Activated CD4-positive, alpha-beta memory T cell treated with anti-CD3 and anti-CD28 coated beads for 36 hours (primary cell): ENCODE measurements at regions of chrX and their contacts with region 1.

Region 1: DNA sequence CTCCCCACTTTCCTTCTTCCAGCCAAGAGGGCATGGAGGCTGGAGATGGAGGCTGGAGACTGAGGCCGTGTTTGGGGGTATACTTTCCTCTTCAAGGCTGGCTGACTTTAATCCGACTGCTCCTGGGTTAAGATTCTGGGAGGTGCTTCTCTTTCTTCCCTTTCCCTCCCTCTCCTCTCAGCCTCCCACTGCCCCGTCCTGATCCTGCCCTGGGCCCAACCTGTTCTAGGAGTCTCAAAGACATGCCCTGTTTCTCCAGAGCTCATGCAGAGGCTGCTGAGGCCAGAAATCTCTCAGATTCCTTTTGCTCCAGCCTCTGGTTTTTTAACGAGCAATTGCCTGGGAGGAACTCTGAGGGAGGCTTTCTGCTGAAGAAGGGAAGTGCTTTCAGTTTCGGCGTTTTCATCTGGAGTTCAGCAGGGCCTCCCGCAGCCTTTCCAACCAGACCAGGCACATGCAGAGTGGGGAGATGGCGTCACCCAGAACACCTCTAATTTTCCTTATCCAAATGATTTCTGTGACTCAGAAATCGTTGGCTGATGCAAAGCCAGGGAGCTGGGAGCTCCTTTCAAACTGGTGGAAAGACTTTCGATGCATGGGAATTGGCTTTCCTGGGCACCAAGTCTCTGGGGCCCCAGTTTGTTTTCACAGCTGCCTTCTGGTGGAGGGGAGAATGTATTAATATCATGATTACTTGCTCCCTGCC is 34.5 kb upstream of the FAM9C start:
- DNase-seq: peak; percentile 20
- H3K4me3 Mint-ChIP-seq: peak overlapping the region; percentile 33
- H3K27ac Mint-ChIP-seq: peak overlapping the region; percentile 43
- H3K4me1 Mint-ChIP-seq: peaks cover 88% of the 10 kb centered on the region
- H3K27me3 Mint-ChIP-seq: no peaks in the 10 kb centered on the region

Region 2: GRCh38 chrX:12974796-12975669 is 103.9 kb before region 1 on chrX and contains the start of gene TMSB4X:
- CTCF ChIA-PET with region 1: interaction called, 3 read pairs
- POLR2A ChIA-PET with region 1: interaction called, 192 read pairs
- intact Hi-C with region 1: no loop called
- DNase-seq: peak; percentile 89
- H3K4me3 Mint-ChIP-seq: peak within 1 kb of the TSS; percentile 94
- H3K27ac Mint-ChIP-seq: peak within 1 kb of the TSS; percentile 99
- H3K4me1 Mint-ChIP-seq: peaks cover 22% of the 10 kb centered on the region
- H3K27me3 Mint-ChIP-seq: peaks cover 3% of the 10 kb centered on the region
- total RNA-seq, gene TMSB4X: 6,087 to 6,256 TPM

Region 3: DNA sequence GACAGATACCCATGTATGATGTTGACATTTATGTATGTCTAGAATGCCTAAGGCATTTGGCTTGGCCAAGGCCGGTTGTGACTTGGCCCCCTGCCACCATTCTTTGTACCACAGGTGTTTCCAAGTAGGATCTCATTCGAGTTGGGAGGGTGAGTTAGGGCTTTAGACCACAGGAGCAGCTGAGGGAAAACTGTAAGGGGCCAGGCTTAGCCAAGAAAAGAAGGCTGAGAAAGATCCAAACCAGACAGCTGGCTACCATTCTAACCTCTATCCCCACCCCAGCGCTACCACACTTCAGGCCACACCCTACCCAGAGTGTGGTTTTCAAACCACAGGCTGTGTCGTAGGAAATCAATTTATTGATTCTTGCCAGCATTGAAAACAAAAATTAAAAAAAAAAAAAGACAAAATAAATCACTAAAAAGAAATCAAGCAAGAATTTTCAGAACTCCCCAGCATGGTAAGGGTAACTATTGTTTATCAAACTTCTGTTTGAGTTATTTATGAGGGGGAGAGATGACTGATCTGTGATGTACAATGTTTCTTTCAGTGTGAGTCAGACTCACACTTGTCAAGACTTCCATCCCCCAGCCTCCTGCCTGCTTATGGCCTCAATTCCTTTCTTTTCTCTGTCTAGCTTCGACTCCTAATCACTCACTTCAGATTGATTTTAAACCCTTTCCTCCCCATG is 94.1 kb before region 1 on chrX:
- CTCF ChIA-PET with region 1: interaction called, 3 read pairs
- POLR2A ChIA-PET with region 1: interaction called, 192 read pairs
- intact Hi-C with region 1: loop called (anchors 1 kb)
- DNase-seq: peak; percentile 65
- H3K4me3 Mint-ChIP-seq: peak overlapping the region; percentile 50
- H3K27ac Mint-ChIP-seq: peak overlapping the region; percentile 94
- H3K4me1 Mint-ChIP-seq: peaks cover 75% of the 10 kb centered on the region
- H3K27me3 Mint-ChIP-seq: no peaks in the 10 kb centered on the region

Region 4: DNA sequence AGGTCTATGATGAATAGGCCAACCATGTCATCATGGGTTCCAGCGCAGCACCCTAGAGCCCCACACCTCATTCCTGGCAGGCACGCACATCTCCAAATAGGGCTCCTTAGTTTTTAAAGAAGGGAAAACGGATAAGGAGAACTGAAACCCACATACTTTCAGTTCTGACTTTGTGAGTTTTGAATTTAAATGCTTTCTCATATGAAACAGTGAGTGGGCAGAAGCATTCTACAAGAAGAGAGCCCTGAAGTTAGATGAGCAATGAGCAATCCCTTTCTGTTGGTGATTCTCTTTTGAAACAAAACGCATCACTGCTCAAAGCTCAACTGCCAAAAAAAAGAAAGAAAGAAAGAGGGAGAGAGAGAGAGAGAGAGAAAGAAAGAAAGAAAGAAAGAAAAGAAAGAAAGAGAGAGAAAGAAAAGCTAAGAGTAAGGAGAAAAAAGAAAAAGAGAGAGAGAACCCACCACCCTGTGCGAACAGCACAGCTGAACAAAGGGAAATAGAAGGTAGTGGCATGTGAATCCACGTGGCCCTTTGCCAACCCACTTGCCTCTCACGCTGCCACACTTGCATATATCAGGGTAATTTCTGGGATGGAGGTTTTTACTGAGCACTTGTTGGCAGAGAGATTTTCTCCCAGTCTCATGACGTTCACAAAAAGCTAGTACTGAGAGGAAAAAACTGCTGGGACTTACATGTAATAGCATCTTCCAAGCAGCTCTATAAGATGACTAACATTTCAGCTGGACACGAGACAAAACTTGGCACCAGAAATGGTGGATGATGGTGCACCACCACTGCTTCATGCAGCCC is 73.0 kb before region 1 on chrX:
- CTCF ChIA-PET with region 1: no interaction called
- POLR2A ChIA-PET with region 1: interaction called, 5 read pairs
- intact Hi-C with region 1: loop called (anchors 1 kb)
- DNase-seq: peak; percentile 52
- H3K4me3 Mint-ChIP-seq: peak overlapping the region; percentile 75
- H3K27ac Mint-ChIP-seq: peak overlapping the region; percentile 99
- H3K4me1 Mint-ChIP-seq: peaks cover 68% of the 10 kb centered on the region
- H3K27me3 Mint-ChIP-seq: no peaks in the 10 kb centered on the region

Region 5: GRCh38 chrX:13029341-13029740 is 49.6 kb before region 1 on chrX:
- CTCF ChIA-PET with region 1: no interaction called
- POLR2A ChIA-PET with region 1: interaction called, 3 read pairs
- intact Hi-C with region 1: loop called (anchors 1 kb)
- DNase-seq: peak; percentile 22
- H3K4me3 Mint-ChIP-seq: no peak overlapping the region
- H3K27ac Mint-ChIP-seq: peak overlapping the region; percentile 81
- H3K4me1 Mint-ChIP-seq: peaks cover 77% of the 10 kb centered on the region
- H3K27me3 Mint-ChIP-seq: no peaks in the 10 kb centered on the region

Region 6: DNA sequence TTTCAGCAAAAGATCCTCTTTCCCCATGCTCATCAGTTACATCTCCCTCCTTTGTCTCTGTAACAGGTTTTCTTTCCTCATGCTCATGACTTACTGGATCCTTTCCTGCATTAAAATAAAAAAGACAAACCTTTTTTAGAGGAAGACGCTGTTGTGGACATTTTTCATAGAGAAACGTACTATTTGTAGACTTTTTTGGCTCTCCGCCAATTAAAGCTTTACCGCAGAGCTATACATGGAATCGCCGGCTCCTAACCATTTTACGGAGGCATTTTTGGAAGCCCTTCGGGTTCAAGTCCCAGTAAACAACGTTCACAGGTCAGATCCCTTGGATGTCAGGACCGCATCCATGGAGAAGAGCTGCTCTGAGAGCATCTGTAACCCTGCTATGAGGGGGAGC is 35.7 kb before region 1 on chrX:
- CTCF ChIA-PET with region 1: no interaction called
- POLR2A ChIA-PET with region 1: interaction called, 3 read pairs
- intact Hi-C with region 1: loop called (anchors 5 kb)
- DNase-seq: no peak
- H3K4me3 Mint-ChIP-seq: no peak overlapping the region
- H3K27ac Mint-ChIP-seq: no peak overlapping the region
- H3K4me1 Mint-ChIP-seq: peaks cover 38% of the 10 kb centered on the region
- H3K27me3 Mint-ChIP-seq: no peaks in the 10 kb centered on the region

Region 7: DNA sequence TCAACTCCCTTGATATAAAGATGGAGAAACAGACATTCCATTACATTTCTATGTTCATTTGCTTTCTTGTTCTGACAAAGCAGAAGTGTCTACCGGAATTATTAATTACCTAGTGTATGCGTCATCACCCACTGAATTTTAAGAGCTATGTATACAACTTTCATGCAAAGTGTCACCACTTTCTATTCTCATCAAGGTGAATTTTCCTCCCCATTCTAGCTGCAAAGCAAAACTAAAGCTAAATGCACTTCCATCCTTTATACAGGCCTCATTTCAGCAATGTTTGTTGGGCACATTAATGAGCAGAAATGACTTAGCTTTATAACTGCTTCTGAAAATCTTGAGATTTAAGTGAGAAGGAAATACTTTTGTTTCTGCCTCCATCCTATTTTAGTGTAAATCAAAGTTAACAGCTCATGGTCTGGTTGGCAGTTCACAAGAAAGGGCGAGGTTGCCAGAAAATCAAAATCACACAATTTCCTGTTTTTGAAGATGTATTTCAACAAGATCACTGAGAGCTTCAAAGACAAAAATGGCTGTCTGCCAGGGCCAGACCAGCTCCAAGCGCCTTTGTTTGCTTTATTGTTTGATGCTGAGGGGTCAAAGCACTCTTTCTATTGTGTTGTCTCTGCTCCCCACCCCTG is 27.2 kb before region 1 on chrX:
- CTCF ChIA-PET with region 1: interaction called, 4 read pairs
- POLR2A ChIA-PET with region 1: interaction called, 32 read pairs
- intact Hi-C with region 1: loop called (anchors 1 kb)
- DNase-seq: peak; percentile 20
- H3K4me3 Mint-ChIP-seq: peak overlapping the region; percentile 4
- H3K27ac Mint-ChIP-seq: peak overlapping the region; percentile 95
- H3K4me1 Mint-ChIP-seq: peaks cover 72% of the 10 kb centered on the region
- H3K27me3 Mint-ChIP-seq: no peaks in the 10 kb centered on the region

Region 8: GRCh38 chrX:13721819-13722519 is 643.1 kb after region 1 on chrX:
- CTCF ChIA-PET with region 1: no interaction called
- POLR2A ChIA-PET with region 1: no interaction called
- intact Hi-C with region 1: no loop called
- DNase-seq: no peak
- H3K4me3 Mint-ChIP-seq: no peak overlapping the region
- H3K27ac Mint-ChIP-seq: no peak overlapping the region
- H3K4me1 Mint-ChIP-seq: peaks cover 57% of the 10 kb centered on the region
- H3K27me3 Mint-ChIP-seq: no peaks in the 10 kb centered on the region